ENCODE measurements at regions of chr11 and their contacts with region 1.

Region 1: DNA sequence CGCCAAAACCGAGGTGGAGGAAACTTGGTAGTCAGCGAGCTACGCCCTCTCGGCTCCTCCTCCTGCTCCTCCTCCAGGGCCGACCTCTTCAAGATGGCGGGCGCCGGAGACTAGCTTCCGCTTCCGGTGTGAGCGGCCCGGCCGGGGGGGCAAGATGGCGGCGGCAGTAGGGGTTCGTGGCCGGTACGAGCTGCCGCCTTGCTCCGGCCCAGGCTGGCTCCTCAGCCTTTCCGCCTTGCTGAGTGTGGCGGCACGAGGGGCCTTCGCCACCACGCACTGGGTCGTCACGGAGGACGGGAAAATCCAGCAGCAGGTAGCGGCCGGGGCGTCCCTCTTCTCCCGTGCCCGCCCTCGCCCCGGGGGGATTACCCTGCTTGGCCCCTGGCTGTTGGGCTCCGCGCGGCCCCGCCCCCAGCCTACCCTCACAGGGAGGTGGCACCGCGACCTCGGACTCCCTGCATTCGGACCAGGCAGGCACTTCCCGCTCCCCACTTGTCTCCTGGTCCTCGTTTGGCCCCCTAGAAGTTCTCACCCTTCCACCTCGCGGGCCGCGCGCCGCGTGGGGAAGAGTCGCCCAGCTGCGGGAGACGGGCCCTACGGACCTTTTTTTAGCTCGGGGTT is at the start of gene TTC17:
- DNase-seq: peak; percentile 87
- ATAC-seq: peak; percentile 98
- H3K4me3 ChIP-seq: peak within 1 kb of the TSS; percentile 85 to 100 (median 97)
- H3K27ac ChIP-seq: peak within 1 kb of the TSS; percentile 82
- H3K4me1 ChIP-seq: peaks cover 38% of the 10 kb centered on the region
- H3K27me3 ChIP-seq: no peaks in the 10 kb centered on the region; a peak in 1 of 5 replicates
- CTCF ChIP-seq: no peak
- EP300 ChIP-seq: no peak
- POLR2A ChIP-seq: peak; percentile 93 to 97
- RAD21 ChIP-seq: peak; percentile 43
- total RNA-seq, gene TTC17: 28.6 and 55.9 TPM in 2 replicates

Region 2: GRCh38 chr11:43311791-43312607 is 46.9 kb before region 1 on chr11 and contains the start of gene API5:
- CTCF ChIA-PET with region 1: no interaction called
- POLR2A ChIA-PET with region 1: interaction called, 36 read pairs
- in situ Hi-C with region 1: no loop called
- intact Hi-C with region 1: loop called (anchors 1 kb)
- DNase-seq: peak; percentile 89
- ATAC-seq: peak; percentile 99
- H3K4me3 ChIP-seq: peak within 1 kb of the TSS; percentile 91 to 97 (median 93)
- H3K27ac ChIP-seq: peak within 1 kb of the TSS; percentile 83
- H3K4me1 ChIP-seq: peaks cover 21% of the 10 kb centered on the region
- H3K27me3 ChIP-seq: no peaks in the 10 kb centered on the region
- CTCF ChIP-seq: peak; percentile 95
- EP300 ChIP-seq: 0 out of 4 replicates have a peak, but pooled peaks of 1 of the 2 experiments have one; percentile 33
- POLR2A ChIP-seq: peak; percentile 80 to 92
- RAD21 ChIP-seq: no peak
- total RNA-seq, gene API5: 59.0 and 93.6 TPM in 2 replicates

Region 3: GRCh38 chr11:43376594-43376993 is 17.7 kb after region 1 on chr11:
- CTCF ChIA-PET with region 1: no interaction called
- POLR2A ChIA-PET with region 1: interaction called, 14 read pairs
- in situ Hi-C with region 1: no loop called
- intact Hi-C with region 1: no loop called
- DNase-seq: peak; percentile 25
- ATAC-seq: no peak
- H3K4me3 ChIP-seq: no peak overlapping the region
- H3K27ac ChIP-seq: no peak overlapping the region
- H3K4me1 ChIP-seq: no peaks in the 10 kb centered on the region
- H3K27me3 ChIP-seq: no peaks in the 10 kb centered on the region
- CTCF ChIP-seq: no peak
- EP300 ChIP-seq: no peak
- POLR2A ChIP-seq: no peak
- RAD21 ChIP-seq: no peak

Measured in HepG2 (cell line).